Calu3 (cell line): ENCODE measurements at regions of chr3 and their contacts with region 1.

Region 1: DNA sequence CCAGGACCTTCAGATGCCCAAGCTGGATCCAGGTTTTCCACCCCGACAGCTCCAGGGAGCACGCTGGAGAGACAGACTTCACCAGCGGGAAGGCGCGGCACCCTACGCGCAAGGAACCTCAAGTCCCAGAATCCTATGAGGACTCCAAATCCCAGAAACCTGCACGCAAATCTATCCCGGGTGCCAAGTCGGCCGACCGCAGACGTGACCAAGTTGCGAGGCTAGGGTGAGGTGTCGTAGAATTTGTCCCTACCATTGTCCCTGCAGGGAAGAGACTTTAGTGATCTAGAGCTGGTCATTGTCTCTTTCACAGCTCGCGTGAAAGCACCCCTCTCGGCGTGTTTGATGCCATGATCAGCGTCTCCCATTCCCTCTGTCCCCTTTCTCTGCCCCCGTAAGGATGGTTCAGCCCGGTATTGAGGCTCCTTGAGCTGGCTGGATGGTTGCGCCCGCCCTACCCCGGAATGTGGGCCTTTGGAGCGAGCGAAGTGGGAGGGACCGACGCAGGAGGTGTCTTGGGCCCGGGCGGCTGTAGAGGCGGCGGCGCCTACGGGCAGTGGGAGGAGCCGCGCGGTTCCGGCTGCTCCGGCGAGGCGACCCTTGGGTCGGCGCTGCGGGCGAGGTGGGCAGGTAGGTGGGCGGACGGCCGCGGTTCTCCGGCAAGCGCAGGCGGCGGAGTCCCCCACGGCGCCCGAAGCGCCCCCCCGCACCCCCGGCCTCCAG is at the start of gene PRKCI:
- DNase-seq: peak; percentile 99
- H3K4me3 Mint-ChIP-seq: peak within 1 kb of the TSS; percentile 86
- H3K27ac Mint-ChIP-seq: peak within 1 kb of the TSS; percentile 99
- H3K4me1 Mint-ChIP-seq: peaks cover 28% of the 10 kb centered on the region
- H3K27me3 Mint-ChIP-seq: no peaks in the 10 kb centered on the region
- CTCF ChIP-seq: no peak
- total RNA-seq, gene PRKCI: 79.5 and 85.6 TPM in 2 replicates

Region 2: GRCh38 chr3:170180908-170181879 is 40.9 kb before region 1 on chr3 and contains the start of gene PHC3:
- CTCF ChIA-PET with region 1: interaction called, 4 read pairs
- intact Hi-C with region 1: loop called (anchors 1 kb)
- DNase-seq: peak; percentile 99
- H3K4me3 Mint-ChIP-seq: peak within 1 kb of the TSS; percentile 98
- H3K27ac Mint-ChIP-seq: peak within 1 kb of the TSS; percentile 96
- H3K4me1 Mint-ChIP-seq: peaks cover 19% of the 10 kb centered on the region
- H3K27me3 Mint-ChIP-seq: no peaks in the 10 kb centered on the region
- CTCF ChIP-seq: no peak
- total RNA-seq, gene PHC3: 113 and 118 TPM in 2 replicates

Region 3: DNA sequence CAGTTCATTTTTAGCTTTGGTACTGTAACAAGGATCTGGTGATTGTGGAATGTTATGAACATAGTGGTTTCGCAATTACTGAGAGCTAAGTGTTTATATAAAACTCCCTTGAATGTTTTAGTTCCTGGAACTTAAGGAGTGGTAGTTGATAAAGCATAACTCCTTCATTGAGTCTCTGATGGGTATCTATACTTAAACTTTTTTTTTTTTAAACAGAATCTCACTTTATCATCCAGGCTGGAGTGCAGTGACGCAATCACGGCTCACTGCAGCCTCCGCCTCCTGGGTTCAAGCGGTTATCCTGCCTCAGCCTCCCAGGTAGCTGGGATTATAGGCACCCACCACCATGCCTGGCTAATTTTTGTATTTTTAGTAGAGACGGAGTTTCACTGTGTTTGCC is 11.4 kb after region 1 on chr3:
- CTCF ChIA-PET with region 1: interaction called, 28 read pairs
- intact Hi-C with region 1: no loop called
- DNase-seq: peak; percentile 66
- H3K4me3 Mint-ChIP-seq: peak overlapping the region; percentile 46
- H3K27ac Mint-ChIP-seq: peak overlapping the region; percentile 95
- H3K4me1 Mint-ChIP-seq: peaks cover 17% of the 10 kb centered on the region
- H3K27me3 Mint-ChIP-seq: no peaks in the 10 kb centered on the region
- CTCF ChIP-seq: no peak